ENCODE measurements at regions of chr11 and their contacts with region 1.

Region 1: DNA sequence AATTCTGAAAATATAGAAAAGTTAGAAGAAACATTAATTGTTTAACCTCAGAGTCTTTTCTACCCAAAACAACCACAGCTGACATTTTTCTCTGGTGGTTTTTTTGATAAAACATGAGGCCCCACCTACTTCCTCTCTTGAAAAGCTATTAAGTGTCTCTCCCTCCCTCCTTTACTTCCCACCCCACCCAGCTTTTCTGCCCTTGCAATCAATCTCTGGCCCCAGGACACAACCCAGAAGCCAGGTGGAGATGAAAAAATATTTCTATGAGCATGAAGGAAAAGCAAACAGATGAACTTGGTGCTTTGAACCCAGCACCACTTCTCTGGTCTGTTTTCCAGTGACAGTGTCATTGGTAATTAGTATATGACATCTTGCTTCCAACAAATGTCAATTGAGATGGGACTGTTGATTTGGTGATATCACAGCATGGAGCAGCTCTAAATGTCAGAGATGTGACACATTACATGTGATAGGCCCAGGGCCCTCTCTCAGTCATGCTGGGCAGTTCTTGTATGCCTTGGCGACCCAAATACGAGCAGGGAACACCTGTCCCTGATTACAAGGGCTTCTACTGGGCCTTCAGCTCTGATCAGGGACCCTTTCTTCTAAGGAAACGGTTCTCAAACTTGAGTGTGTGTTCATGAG is 23.9 kb upstream of the TMPRSS13 start:
- DNase-seq: peak in 7 of 9 donors; percentile 55 to 77 (median 73)
- ATAC-seq: peak; percentile 58
- H3K4me3 ChIP-seq: peak overlapping the region; percentile 22
- H3K4me3 Mint-ChIP-seq: peak overlapping the region; percentile 75 to 92 (median 82)
- H3K27ac ChIP-seq: peak overlapping the region; percentile 58
- H3K27ac Mint-ChIP-seq: peak overlapping the region; percentile 87 to 96 (median 90)
- H3K4me1 ChIP-seq: peaks cover 59 to 68% of the 10 kb centered on the region in 2 donors
- H3K4me1 Mint-ChIP-seq: peaks cover 58 to 100% (median 98%) of the 10 kb centered on the region in 7 donors
- H3K27me3 ChIP-seq: no peaks in the 10 kb centered on the region
- H3K27me3 Mint-ChIP-seq: no peaks in the 10 kb centered on the region

Region 2: GRCh38 chr11:117375960-117376359 is 577.2 kb before region 1 on chr11:
- CTCF ChIA-PET with region 1: no interaction called
- POLR2A ChIA-PET with region 1: no interaction called
- intact Hi-C with region 1: no loop called
- DNase-seq: no peak
- ATAC-seq: no peak
- H3K4me3 ChIP-seq: no peak overlapping the region
- H3K4me3 Mint-ChIP-seq: no peak overlapping the region
- H3K27ac ChIP-seq: no peak overlapping the region
- H3K27ac Mint-ChIP-seq: no peak overlapping the region
- H3K4me1 ChIP-seq: no peaks in the 10 kb centered on the region
- H3K4me1 Mint-ChIP-seq: no peaks in the 10 kb centered on the region
- H3K27me3 ChIP-seq: no peaks in the 10 kb centered on the region
- H3K27me3 Mint-ChIP-seq: no peaks in the 10 kb centered on the region

Region 3: DNA sequence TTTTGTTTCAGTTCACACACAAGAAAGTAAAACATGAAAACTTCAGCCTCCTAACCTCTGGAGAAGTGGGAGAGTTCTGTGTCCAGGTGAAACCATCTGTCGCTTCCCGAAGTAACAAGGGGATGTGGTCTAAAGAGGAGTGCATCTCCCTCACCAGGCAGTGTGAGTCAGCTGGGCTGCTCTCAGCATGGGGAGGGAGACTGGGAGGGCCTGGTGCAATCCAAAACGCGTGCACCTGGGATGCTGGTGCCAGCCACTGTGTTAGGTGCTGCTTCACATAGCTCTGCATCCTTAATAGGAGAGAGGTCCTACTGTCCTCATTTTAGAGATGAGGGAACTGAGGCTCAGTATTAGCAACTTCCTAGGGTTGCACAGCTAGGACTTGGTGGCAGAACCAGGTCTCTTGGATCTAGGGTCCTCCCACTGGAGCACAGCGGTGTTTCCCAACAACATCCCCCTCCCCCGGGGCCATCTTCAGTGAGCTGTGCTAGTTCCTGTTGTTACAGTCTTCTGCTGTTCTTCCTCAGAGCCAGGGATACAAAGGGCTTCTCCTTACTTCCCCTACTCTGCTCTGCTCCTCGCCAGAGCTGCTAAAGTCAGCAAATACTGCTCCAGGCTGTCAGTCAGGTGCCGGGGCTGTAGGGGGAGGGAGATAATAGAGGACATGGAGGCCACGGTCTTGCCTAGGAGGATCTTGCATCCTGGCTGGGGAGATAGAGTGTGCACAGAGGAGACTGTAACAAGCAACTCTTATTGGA is 41.0 kb after region 1 on chr11:
- CTCF ChIA-PET with region 1: interaction called, 70 read pairs
- POLR2A ChIA-PET with region 1: interaction called, 302 read pairs
- intact Hi-C with region 1: no loop called
- DNase-seq: no peak
- ATAC-seq: peak; percentile 14
- H3K4me3 ChIP-seq: no peak overlapping the region
- H3K4me3 Mint-ChIP-seq: peak overlapping the region in 3 of 10 donors; percentile 40 to 80 (median 55)
- H3K27ac ChIP-seq: peak overlapping the region; percentile 51
- H3K27ac Mint-ChIP-seq: peak overlapping the region; percentile 40 to 92 (median 78)
- H3K4me1 ChIP-seq: peaks cover 55 to 89% of the 10 kb centered on the region in 2 donors
- H3K4me1 Mint-ChIP-seq: peaks cover 50 to 91% (median 63%) of the 10 kb centered on the region in 7 donors
- H3K27me3 ChIP-seq: no peaks in the 10 kb centered on the region
- H3K27me3 Mint-ChIP-seq: no peaks in the 10 kb centered on the region

Measured in naive thymus-derived CD4-positive, alpha-beta T cell (primary cell).